ENCODE measurements at regions of chr1 and their contacts with region 1.

Region 1: GRCh38 chr1:91712981-91713841 is 172.7 kb downstream of the TGFBR3 start:
- DNase-seq: peak; percentile 57 to 73
- ATAC-seq: peak; percentile 87 to 93 (median 92)
- H3K4me3 ChIP-seq: no peak overlapping the region
- H3K4me3 Mint-ChIP-seq: peak overlapping the region; percentile 82
- H3K27ac ChIP-seq: peak overlapping the region; percentile 70
- H3K27ac Mint-ChIP-seq: peak overlapping the region; percentile 94 to 99
- H3K4me1 ChIP-seq: peaks cover 35% of the 10 kb centered on the region
- H3K4me1 Mint-ChIP-seq: peaks cover 70 to 76% of the 10 kb centered on the region in 2 donors
- H3K27me3 ChIP-seq: no peaks in the 10 kb centered on the region
- H3K27me3 Mint-ChIP-seq: no peaks in the 10 kb centered on the region
- CTCF ChIP-seq: no peak

Region 2: GRCh38 chr1:91476533-91477217 is 236.5 kb before region 1 on chr1:
- intact Hi-C with region 1: no loop called
- DNase-seq: no peak
- ATAC-seq: no peak
- H3K4me3 ChIP-seq: no peak overlapping the region
- H3K4me3 Mint-ChIP-seq: no peak overlapping the region
- H3K27ac ChIP-seq: no peak overlapping the region
- H3K27ac Mint-ChIP-seq: no peak overlapping the region
- H3K4me1 ChIP-seq: no peaks in the 10 kb centered on the region
- H3K4me1 Mint-ChIP-seq: no peaks in the 10 kb centered on the region
- H3K27me3 ChIP-seq: no peaks in the 10 kb centered on the region
- H3K27me3 Mint-ChIP-seq: peaks cover 0 to 3% of the 10 kb centered on the region in 2 donors
- CTCF ChIP-seq: no peak

Region 3: DNA sequence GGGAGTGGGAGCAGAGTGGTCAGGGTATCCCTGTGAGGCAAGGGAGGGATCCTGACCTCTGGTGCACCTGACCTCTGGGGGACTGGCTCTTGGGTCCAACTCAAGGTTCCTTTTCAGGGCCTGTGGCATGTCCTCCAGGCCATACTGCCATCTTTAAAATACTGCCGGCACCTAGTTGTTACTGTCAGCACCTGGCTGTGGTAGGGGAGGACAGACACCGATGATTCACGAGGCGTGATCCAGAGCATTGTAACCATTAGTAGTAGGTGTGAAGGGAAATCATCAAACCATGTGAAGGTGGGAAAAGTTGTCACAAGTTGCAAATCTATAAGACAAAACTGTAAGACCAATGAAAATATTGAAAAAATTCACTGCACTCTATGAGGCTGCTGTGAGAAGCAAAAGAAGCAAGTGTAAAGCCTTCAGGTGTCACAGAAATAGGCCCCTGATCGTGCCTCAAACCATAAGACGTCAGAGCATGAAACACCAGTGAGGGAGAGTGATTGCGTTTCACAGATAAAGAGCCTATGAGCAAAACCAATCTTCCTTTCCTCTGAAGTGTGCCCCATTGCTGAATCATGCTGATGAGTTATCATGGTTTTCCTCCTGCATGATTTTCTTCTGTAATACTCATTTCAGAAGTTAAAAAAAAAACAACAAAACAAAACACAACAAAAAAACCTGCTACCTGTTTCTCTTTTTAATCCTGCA is 157.2 kb before region 1 on chr1:
- intact Hi-C with region 1: loop called (anchors 2 kb)
- DNase-seq: peak; percentile 57 to 93
- ATAC-seq: peak; percentile 81 to 94 (median 87)
- H3K4me3 ChIP-seq: no peak overlapping the region
- H3K4me3 Mint-ChIP-seq: peak overlapping the region; percentile 81
- H3K27ac ChIP-seq: peak overlapping the region; percentile 90
- H3K27ac Mint-ChIP-seq: peak overlapping the region; percentile 83 to 99
- H3K4me1 ChIP-seq: peaks cover 73% of the 10 kb centered on the region
- H3K4me1 Mint-ChIP-seq: peaks cover 94 to 97% of the 10 kb centered on the region in 2 donors
- H3K27me3 ChIP-seq: no peaks in the 10 kb centered on the region
- H3K27me3 Mint-ChIP-seq: no peaks in the 10 kb centered on the region
- CTCF ChIP-seq: no peak

Region 4: DNA sequence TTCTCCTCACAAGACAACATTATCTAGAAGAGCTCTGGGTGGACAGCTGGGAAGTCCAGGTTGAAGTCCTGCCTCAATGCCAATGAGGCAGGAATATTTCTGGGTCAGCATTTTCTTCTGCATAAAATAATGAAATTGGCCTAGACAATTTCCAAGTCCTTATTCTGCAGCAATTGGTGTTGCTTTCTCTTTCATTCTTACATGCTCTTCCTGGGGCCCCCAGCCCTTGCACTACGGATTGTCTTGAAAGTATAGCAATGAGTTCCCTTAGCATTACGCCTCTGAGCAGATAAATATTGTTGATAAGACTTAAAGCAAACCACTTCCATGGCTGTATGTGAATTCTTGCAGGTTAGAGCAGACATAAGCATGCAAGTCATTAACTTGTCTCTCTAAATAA is 15.8 kb before region 1 on chr1:
- intact Hi-C with region 1: no loop called
- DNase-seq: peak; percentile 34 to 70
- ATAC-seq: peak; percentile 91 to 97 (median 92)
- H3K4me3 ChIP-seq: no peak overlapping the region
- H3K4me3 Mint-ChIP-seq: peak overlapping the region; percentile 81
- H3K27ac ChIP-seq: peak overlapping the region; percentile 44
- H3K27ac Mint-ChIP-seq: peak overlapping the region; percentile 90 to 91
- H3K4me1 ChIP-seq: peaks cover 20% of the 10 kb centered on the region
- H3K4me1 Mint-ChIP-seq: peaks cover 65 to 77% of the 10 kb centered on the region in 2 donors
- H3K27me3 ChIP-seq: no peaks in the 10 kb centered on the region
- H3K27me3 Mint-ChIP-seq: no peaks in the 10 kb centered on the region
- CTCF ChIP-seq: no peak

Region 5: GRCh38 chr1:91754348-91754747 is 41.1 kb after region 1 on chr1:
- intact Hi-C with region 1: loop called (anchors 5 kb)
- DNase-seq: no peak
- ATAC-seq: peak; percentile 32 to 61 (median 52)
- H3K4me3 ChIP-seq: no peak overlapping the region
- H3K4me3 Mint-ChIP-seq: peak overlapping the region; percentile 62
- H3K27ac ChIP-seq: peak overlapping the region; percentile 57
- H3K27ac Mint-ChIP-seq: peak overlapping the region; percentile 86 to 87
- H3K4me1 ChIP-seq: peaks cover 36% of the 10 kb centered on the region
- H3K4me1 Mint-ChIP-seq: peaks cover 70 to 76% of the 10 kb centered on the region in 2 donors
- H3K27me3 ChIP-seq: no peaks in the 10 kb centered on the region
- H3K27me3 Mint-ChIP-seq: no peaks in the 10 kb centered on the region
- CTCF ChIP-seq: no peak

Region 6: DNA sequence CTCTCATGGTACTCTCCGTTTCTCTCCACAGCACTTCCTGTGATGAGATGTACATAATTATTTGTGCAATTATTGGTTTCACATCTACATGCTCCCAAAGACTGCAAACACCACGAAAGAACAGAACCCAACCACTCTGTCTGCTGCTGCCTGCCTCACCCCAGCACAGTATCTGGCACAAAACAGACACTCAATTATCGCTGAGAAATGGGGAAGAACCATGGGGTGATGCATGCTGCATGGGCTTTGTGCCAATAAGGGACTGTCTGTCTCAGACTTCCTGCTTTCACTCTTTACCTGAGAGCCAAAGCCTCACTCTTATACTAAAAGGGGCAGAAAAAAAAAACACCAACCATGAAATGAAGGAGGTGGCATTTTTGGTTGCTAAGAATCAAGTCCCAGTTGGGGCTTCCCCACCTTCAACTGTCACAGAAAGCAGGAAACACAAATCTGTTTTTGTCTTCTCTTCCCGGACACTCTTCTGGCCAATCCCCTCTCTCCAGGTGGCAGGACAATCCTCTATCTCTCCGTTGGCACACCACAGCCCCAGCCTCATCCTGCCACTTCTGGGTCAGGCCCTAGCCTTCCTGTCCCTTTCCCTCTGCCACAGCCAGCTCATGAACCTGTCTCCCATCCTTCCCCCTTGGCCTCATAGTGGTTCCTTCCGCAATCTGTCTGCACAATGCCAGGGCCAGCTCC is 90.8 kb after region 1 on chr1:
- intact Hi-C with region 1: loop called (anchors 1 kb)
- DNase-seq: peak; percentile 56 to 95
- ATAC-seq: peak; percentile 58 to 79 (median 69)
- H3K4me3 ChIP-seq: peak overlapping the region; percentile 8
- H3K4me3 Mint-ChIP-seq: peak overlapping the region; percentile 78
- H3K27ac ChIP-seq: peak overlapping the region; percentile 97
- H3K27ac Mint-ChIP-seq: peak overlapping the region; percentile 95 to 96
- H3K4me1 ChIP-seq: peaks cover 63% of the 10 kb centered on the region
- H3K4me1 Mint-ChIP-seq: peaks cover 89 to 92% of the 10 kb centered on the region in 2 donors
- H3K27me3 ChIP-seq: no peaks in the 10 kb centered on the region
- H3K27me3 Mint-ChIP-seq: no peaks in the 10 kb centered on the region
- CTCF ChIP-seq: no peak

Region 7: GRCh38 chr1:91883470-91883869 is 170.3 kb after region 1 on chr1:
- intact Hi-C with region 1: loop called (anchors 2 kb)
- DNase-seq: peak in 1 of 2 donors; percentile 67
- ATAC-seq: peak in 1 of 3 donors; percentile 18
- H3K4me3 ChIP-seq: peak overlapping the region; percentile 52
- H3K4me3 Mint-ChIP-seq: peak overlapping the region; percentile 99
- H3K27ac ChIP-seq: no peak overlapping the region
- H3K27ac Mint-ChIP-seq: peak overlapping the region; percentile 85 to 97
- H3K4me1 ChIP-seq: peaks cover 43% of the 10 kb centered on the region
- H3K4me1 Mint-ChIP-seq: peaks cover 61 to 65% of the 10 kb centered on the region in 2 donors
- H3K27me3 ChIP-seq: no peaks in the 10 kb centered on the region
- H3K27me3 Mint-ChIP-seq: no peaks in the 10 kb centered on the region
- CTCF ChIP-seq: peak; percentile 64

Region 8: GRCh38 chr1:91929250-91929649 is 216.0 kb after region 1 on chr1:
- intact Hi-C with region 1: loop called (anchors 5 kb)
- DNase-seq: no peak
- ATAC-seq: no peak
- H3K4me3 ChIP-seq: no peak overlapping the region
- H3K4me3 Mint-ChIP-seq: no peak overlapping the region
- H3K27ac ChIP-seq: no peak overlapping the region
- H3K27ac Mint-ChIP-seq: no peak overlapping the region
- H3K4me1 ChIP-seq: peaks cover 2% of the 10 kb centered on the region
- H3K4me1 Mint-ChIP-seq: peaks cover 2% of the 10 kb centered on the region in 2 donors
- H3K27me3 ChIP-seq: no peaks in the 10 kb centered on the region
- H3K27me3 Mint-ChIP-seq: no peaks in the 10 kb centered on the region
- CTCF ChIP-seq: no peak

Measured in natural killer cell (primary cell).